IMR-90 (cell line): ENCODE measurements at regions of chr1 and their contacts with region 1.

Region 1: DNA sequence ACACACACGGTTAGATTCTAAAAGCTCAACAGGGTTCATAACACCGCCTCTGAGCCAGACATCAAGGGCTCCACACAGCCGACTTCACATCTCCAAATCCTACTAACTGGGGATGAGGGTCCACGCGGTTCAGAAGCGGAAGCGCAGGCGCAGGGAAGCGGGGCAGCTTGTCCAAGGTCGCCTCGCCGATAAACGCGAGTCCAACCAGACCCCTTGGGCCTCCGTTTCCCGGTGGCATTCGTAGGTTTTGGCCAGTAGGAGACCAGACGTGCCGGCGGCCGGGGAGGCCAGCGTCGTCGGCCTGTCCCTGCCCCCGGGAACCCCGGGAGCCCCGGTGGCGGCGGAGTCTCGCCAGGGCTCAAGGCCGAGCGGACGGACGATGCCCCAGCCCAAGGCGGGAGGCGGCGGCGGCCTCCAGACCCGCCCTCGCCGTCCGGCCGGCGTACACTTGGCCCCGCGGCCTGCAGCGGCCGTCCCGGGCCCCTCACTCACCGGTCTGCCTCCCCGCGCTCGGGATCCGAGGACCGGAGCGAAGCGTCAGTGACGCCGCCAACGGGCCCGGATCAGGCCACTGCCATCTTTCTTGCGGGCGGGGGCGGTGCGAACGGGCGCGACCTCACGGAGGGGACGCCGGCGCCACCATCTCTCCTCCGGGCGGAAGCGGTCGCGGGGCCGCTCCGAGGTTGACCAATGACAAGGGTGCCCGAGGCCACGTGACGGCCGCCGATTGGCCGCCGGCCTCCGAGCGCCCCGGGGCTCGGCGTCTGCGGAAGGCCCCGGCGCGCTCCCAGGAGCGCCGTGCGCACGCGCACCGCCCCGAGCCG is at the start of gene SDF4:
- DNase-seq: peak; percentile 95
- ATAC-seq: peak; percentile 94
- H3K4me3 ChIP-seq: peak within 1 kb of the TSS; percentile 84
- H3K27ac ChIP-seq: peak within 1 kb of the TSS; percentile 81
- H3K4me1 ChIP-seq: peaks cover 13% of the 10 kb centered on the region; the same call in 1 of the 2 replicates
- H3K27me3 ChIP-seq: no peaks in the 10 kb centered on the region
- CTCF ChIP-seq: no peak
- POLR2A ChIP-seq: peak; percentile 93
- RAD21 ChIP-seq: 0 out of 2 replicates have a peak, but pooled peaks have one; percentile 1
- total RNA-seq, gene SDF4: 57.0 and 69.4 TPM in 2 replicates

Region 2: GRCh38 chr1:983799-984473 is 247.7 kb before region 1 on chr1:
- CTCF ChIA-PET with region 1: no interaction called
- POLR2A ChIA-PET with region 1: no interaction called
- dilution Hi-C with region 1: no loop called
- in situ Hi-C with region 1: no loop called
- intact Hi-C with region 1: loop called (anchors 5 kb)
- DNase-seq: no peak
- ATAC-seq: peak; percentile 97
- H3K4me3 ChIP-seq: no peak overlapping the region
- H3K27ac ChIP-seq: no peak overlapping the region
- H3K4me1 ChIP-seq: no peaks in the 10 kb centered on the region
- H3K27me3 ChIP-seq: peaks cover 5% of the 10 kb centered on the region; the same call in 1 of the 2 replicates
- CTCF ChIP-seq: peak; percentile 67
- POLR2A ChIP-seq: peak; percentile 37; the same call in 1 of the 2 replicates
- RAD21 ChIP-seq: peak; percentile 71

Region 3: DNA sequence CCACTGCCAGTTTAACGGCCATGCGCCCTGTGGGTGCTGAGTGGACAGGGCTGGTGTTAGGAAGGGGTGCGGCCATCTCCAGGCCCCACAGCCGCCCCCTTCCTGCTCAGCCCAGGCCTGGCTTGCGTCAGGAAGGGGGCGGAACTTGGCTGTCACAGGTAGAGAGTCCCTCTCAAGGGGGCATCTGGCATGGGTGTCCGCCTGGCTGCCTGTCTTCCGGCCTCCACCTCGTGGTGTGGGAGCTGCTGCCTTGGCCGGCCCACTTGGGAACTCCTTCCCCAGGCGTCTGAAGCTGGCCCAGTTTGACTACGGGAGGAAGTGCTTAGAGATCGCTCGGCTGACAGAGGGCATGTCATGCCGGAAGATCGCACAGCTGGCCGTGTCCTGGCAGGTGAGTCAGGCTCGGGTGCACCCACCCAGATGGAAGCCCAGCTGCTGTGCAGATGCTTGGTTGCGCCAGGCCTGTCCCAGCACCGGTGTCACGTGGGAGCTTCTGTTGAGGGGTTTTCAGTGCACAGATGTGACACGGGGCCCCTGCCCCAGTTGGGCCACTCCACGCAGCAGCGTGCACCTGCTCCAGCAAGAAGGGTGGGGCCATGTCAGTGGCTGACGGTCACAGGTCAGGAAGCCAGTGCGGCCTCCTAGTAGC is 230.8 kb after region 1 on chr1:
- CTCF ChIA-PET with region 1: no interaction called
- POLR2A ChIA-PET with region 1: no interaction called
- dilution Hi-C with region 1: no loop called
- in situ Hi-C with region 1: no loop called
- intact Hi-C with region 1: no loop called
- DNase-seq: no peak
- ATAC-seq: no peak
- H3K4me3 ChIP-seq: no peak overlapping the region
- H3K27ac ChIP-seq: no peak overlapping the region
- H3K4me1 ChIP-seq: no peaks in the 10 kb centered on the region
- H3K27me3 ChIP-seq: no peaks in the 10 kb centered on the region
- CTCF ChIP-seq: no peak
- POLR2A ChIP-seq: no peak
- RAD21 ChIP-seq: no peak